ENCODE measurements at regions of chr5 and their contacts with region 1.

Region 1: DNA sequence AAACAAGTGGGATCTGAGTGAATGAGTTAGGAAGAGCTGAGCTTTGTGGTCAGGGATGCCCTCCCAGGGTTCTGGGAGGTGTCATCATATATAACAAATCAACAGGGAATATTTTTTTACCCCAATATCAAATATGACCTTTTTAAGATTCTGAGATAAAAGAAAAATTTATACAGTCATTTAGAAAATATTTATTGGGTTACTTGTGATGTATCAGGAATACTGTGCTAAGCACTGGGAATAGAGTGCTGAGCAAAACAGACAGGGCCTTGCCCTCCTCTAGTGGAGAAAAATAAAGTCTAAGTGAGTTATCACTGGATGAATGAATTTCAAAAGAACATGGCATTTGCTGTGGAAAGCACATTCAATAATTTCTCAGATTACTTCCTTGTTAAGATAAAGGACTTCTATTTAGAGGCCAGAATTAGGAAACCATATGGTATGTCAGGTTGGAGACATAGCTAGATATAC is 102.9 kb downstream of the BOD1 start:
- DNase-seq: no peak
- H3K4me3 ChIP-seq: no peak overlapping the region
- H3K27ac ChIP-seq: no peak overlapping the region
- H3K4me1 ChIP-seq: no peaks in the 10 kb centered on the region
- H3K27me3 ChIP-seq: no peaks in the 10 kb centered on the region
- CTCF ChIP-seq: no peak

Region 2: DNA sequence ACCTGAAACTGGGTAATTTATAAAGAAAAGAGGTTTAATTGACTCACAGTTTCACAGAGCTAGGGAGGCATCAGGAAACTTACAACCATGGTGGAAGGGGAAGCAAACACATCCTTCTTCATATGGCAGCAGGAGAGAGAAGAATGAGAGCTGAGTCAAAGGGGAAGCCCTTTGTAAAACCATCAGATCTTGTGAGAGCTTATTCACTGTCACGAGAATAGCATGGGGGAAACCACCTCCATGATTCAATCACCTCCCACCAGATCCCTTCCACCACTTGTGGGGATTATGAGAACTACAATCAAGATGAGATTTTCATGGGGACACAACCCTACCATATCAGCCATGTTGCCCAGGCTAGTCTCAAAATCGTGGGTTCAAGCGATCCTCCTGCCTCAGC is 1950.7 kb before region 1 on chr5:
- intact Hi-C with region 1: loop called (anchors 5 kb)
- DNase-seq: no peak
- H3K4me3 ChIP-seq: no peak overlapping the region
- H3K27ac ChIP-seq: no peak overlapping the region
- H3K4me1 ChIP-seq: no peaks in the 10 kb centered on the region
- H3K27me3 ChIP-seq: no peaks in the 10 kb centered on the region
- CTCF ChIP-seq: no peak